Left cardiac atrium (tissue), 4 donors: ENCODE measurements at regions of chr2 and their contacts with region 1.

Region 1: GRCh38 chr2:117470311-117471095 is 344.0 kb upstream of the DDX18 start:
- DNase-seq: no peak
- ATAC-seq: no peak

Region 2: DNA sequence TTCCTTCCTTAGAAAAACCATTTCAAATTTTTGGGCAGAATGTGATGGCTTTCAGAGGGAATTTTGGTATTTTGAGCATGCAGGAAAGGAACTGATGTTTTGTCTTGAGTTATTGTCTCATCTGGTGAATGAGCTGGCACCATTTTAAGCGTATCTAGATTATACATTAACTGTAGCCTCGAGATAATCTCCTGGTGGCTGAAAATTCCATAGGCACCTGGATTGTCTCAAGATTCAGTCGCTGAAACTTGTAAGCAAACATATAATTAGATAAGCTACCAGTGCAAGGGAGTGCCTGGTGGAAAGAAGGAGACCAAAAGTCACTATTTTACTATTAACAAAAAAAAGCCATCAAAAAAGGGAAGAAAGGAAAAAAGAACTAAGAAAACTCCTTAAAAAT is 343.8 kb before region 1 on chr2:
- intact Hi-C with region 1: no loop called
- DNase-seq: no peak
- ATAC-seq: no peak

Region 3: GRCh38 chr2:117571590-117572349 is 101.3 kb after region 1 on chr2:
- intact Hi-C with region 1: no loop called
- DNase-seq: no peak
- ATAC-seq: no peak

Region 4: GRCh38 chr2:117614823-117615534 is 144.5 kb after region 1 on chr2:
- intact Hi-C with region 1: no loop called
- DNase-seq: no peak
- ATAC-seq: no peak

Region 5: GRCh38 chr2:117753857-117754256 is 283.4 kb after region 1 on chr2:
- intact Hi-C with region 1: no loop called
- DNase-seq: no peak
- ATAC-seq: no peak

Region 6: GRCh38 chr2:117785740-117786139 is 315.2 kb after region 1 on chr2:
- intact Hi-C with region 1: loop called in 1 of 2 experiments (anchors 10 kb)
- DNase-seq: no peak
- ATAC-seq: no peak